ENCODE measurements at regions of chr10 and their contacts with region 1.

Region 1: DNA sequence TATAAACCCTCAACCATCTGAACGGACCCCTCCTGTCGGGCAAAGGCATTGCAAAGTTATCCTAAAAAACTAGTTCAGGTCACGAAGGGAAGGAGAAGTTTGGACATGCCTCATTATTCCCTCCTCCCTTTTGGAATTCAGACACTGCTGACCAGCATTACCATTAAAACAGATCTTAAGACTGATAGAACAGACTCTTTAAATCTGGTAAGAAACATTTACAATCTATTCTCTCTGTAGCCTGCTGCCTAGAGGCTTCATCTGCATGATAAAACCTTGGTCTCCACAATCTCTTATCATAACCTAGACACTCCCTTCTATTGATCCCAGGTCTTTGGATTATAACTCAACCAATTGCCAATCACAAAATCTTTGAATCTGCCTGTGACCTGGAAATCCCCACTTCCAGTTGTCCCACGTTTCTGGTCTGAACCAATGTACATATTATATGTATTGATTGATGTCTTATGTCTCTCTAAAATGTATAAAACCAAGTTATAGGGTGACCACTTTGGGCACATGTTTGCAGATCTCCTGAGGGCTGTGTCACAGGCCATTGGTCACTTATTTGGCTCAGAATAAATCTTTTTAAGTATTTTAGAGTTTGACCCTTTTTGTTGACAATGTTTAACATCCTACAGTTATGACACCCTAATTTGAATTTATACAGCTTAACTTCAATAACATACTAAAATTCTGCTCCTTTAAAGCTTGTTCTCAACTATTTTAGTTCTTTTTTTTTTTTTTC is 23.5 kb upstream of the CNNM2 start:
- DNase-seq: no peak
- H3K4me3 ChIP-seq: no peak overlapping the region
- H3K27ac ChIP-seq: no peak overlapping the region
- H3K4me1 ChIP-seq: no peaks in the 10 kb centered on the region
- H3K27me3 ChIP-seq: no peaks in the 10 kb centered on the region
- CTCF ChIP-seq: no peak

Region 2: DNA sequence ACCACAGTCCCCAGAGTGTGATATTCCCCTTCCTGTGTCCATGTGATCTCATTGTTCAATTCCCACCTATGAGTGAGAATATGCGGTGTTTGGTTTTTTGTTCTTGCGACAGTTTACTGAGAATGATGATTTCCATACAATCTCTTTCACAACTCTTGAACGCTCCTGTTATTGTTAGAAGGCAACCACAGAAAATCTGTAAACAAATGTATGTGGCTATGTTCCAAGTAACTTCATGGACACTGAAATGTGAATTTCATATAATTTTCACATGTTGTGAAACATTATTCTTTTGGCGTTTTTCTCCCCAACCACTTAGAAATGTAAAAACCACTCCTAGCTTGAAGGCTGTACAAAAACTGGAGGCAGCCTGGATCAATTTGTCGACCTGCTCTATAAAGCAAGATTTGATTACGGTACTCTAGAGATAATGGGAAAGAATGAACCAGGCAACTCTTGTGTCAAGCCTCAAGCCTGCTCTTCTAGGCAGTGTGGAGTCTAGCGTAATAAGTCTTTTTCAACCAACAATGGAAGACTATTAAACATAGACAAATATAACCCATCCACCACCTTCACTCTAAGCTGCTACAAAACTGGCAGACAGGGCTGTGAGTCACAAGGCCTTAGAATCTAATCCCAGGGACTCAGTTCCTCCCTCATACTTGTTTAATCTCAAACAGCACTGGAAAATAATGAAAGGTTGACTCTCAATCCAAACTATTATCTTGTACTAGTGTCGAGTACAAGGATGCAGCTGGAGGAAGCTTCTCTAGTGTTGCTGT is 203.2 kb before region 1 on chr10:
- CTCF ChIA-PET with region 1: no interaction called
- POLR2A ChIA-PET with region 1: no interaction called
- intact Hi-C with region 1: no loop called
- DNase-seq: no peak
- H3K4me3 ChIP-seq: no peak overlapping the region
- H3K27ac ChIP-seq: no peak overlapping the region
- H3K4me1 ChIP-seq: peaks cover 6% of the 10 kb centered on the region
- H3K27me3 ChIP-seq: no peaks in the 10 kb centered on the region
- CTCF ChIP-seq: no peak

Region 3: GRCh38 chr10:102853944-102854694 is 40.5 kb before region 1 on chr10 and contains the start of gene BORCS7:
- CTCF ChIA-PET with region 1: interaction called, 12 read pairs
- POLR2A ChIA-PET with region 1: no interaction called
- intact Hi-C with region 1: no loop called
- DNase-seq: peak; percentile 79 to 86
- H3K4me3 ChIP-seq: peak within 1 kb of the TSS; percentile 69
- H3K27ac ChIP-seq: peak within 1 kb of the TSS; percentile 63
- H3K4me1 ChIP-seq: no peaks in the 10 kb centered on the region
- H3K27me3 ChIP-seq: no peaks in the 10 kb centered on the region
- CTCF ChIP-seq: no peak
- total RNA-seq, gene BORCS7: 8.2 and 9.4 TPM in 2 replicates

Region 4: DNA sequence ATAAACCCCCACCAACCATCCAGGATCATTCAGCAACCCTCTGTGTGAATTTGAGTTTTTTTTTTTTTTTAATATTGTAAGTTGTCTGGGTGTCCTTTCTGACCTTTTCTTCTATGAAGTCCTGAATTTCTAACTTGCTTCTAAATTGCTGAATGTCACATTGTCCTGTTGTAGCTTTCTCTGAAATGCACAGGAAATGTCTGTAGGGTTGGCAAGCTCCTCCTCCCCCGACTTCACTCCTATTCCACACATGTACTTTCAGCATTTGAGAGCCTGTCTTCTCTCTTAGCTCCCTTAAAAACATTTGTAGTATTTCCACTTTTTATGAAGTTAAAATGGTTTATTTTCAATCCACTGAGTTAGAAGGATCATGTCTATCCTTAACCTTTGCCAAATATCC is 20.1 kb after region 1 on chr10:
- CTCF ChIA-PET with region 1: no interaction called
- POLR2A ChIA-PET with region 1: no interaction called
- intact Hi-C with region 1: no loop called
- DNase-seq: no peak
- H3K4me3 ChIP-seq: no peak overlapping the region
- H3K27ac ChIP-seq: no peak overlapping the region
- H3K4me1 ChIP-seq: peaks cover 8% of the 10 kb centered on the region
- H3K27me3 ChIP-seq: no peaks in the 10 kb centered on the region
- CTCF ChIP-seq: no peak